CD8-positive, alpha-beta memory T cell (primary cell): ENCODE measurements at regions of chr9 and their contacts with region 1.

Region 1: GRCh38 chr9:6412487-6413364 is at the start of gene UHRF2:
- DNase-seq: peak; percentile 96 to 100 (median 98)
- H3K4me3 ChIP-seq: peak within 1 kb of the TSS; percentile 63
- H3K4me3 Mint-ChIP-seq: peak within 1 kb of the TSS; percentile 89 to 96 (median 92)
- H3K27ac ChIP-seq: peak within 1 kb of the TSS; percentile 79
- H3K27ac Mint-ChIP-seq: peak within 1 kb of the TSS; percentile 83 to 98 (median 92)
- H3K4me1 ChIP-seq: peaks cover 27% of the 10 kb centered on the region
- H3K4me1 Mint-ChIP-seq: peaks cover 34 to 38% (median 36%) of the 10 kb centered on the region in 3 donors
- H3K27me3 ChIP-seq: no peaks in the 10 kb centered on the region
- H3K27me3 Mint-ChIP-seq: no peaks in the 10 kb centered on the region
- total RNA-seq, gene UHRF2: 50.8 to 55.2 TPM

Region 2: DNA sequence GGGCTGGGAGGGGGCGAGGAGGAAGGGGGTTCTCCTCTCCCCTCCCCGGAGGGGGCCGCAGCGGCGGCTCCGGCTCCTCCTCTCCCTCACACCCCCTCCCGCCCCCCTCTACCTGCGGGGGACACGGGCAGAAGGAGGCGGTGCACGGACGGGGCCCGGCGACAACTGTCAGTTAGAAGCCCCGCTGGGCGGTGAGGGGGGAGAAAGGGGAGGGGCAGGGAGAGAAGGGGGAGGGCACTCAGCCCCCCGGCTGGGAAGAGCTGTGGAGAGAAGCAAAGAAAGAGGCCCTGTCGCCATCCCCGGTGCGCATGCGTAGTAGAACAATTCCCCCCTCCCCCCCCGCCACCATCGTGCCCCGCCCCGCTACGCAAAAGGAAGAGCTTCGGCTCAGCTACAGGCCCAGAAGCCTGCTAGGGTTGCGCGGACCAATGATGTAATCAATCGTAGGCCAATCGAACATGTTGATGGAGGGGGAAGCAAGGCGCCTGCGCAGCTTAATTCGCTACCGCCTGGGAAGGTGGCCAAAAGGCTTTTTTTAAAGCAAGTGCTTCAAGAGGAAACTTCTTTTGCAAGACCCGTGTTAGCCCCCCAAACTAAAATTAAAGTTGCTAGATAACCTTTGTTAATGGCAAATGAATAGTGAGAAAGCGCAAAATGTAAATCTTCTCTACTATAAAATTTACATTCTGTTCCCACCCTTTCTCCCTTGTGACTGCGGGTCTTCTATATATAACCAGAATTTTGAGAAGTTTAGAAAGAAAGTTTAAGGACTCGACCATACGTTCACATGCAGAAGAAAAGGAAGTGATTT is 404.4 kb before region 1 on chr9:
- CTCF ChIA-PET with region 1: no interaction called
- POLR2A ChIA-PET with region 1: interaction called, 14 read pairs
- DNase-seq: peak; percentile 86 to 98 (median 92)
- H3K4me3 ChIP-seq: peak overlapping the region; percentile 58
- H3K4me3 Mint-ChIP-seq: peak overlapping the region; percentile 80 to 99 (median 94)
- H3K27ac ChIP-seq: peak overlapping the region; percentile 81
- H3K27ac Mint-ChIP-seq: peak overlapping the region; percentile 56 to 99 (median 90)
- H3K4me1 ChIP-seq: peaks cover 34% of the 10 kb centered on the region
- H3K4me1 Mint-ChIP-seq: peaks cover 47 to 72% (median 67%) of the 10 kb centered on the region in 3 donors
- H3K27me3 ChIP-seq: no peaks in the 10 kb centered on the region
- H3K27me3 Mint-ChIP-seq: peaks cover 0 to 2% of the 10 kb centered on the region in 2 donors

Region 3: DNA sequence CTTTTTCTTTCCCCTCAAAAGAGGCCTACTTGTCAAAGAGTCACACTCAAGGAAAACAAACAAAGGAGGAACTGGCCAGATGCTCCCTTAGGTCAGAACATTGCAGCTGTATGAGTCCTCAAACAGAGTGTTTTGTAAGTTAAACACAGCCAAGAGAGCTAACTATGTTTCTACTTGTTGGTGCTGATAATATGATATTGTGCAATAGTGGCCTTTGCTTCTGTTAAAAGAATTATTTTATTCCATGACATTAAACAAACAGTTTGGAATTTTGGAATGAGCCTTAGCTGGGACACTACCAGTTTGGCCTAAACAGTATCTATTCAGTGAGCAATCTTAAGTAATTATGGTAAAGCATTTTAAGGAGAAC is 140.5 kb before region 1 on chr9:
- CTCF ChIA-PET with region 1: no interaction called
- POLR2A ChIA-PET with region 1: no interaction called
- DNase-seq: no peak
- H3K4me3 ChIP-seq: no peak overlapping the region
- H3K4me3 Mint-ChIP-seq: no peak overlapping the region
- H3K27ac ChIP-seq: no peak overlapping the region
- H3K27ac Mint-ChIP-seq: no peak overlapping the region
- H3K4me1 ChIP-seq: no peaks in the 10 kb centered on the region
- H3K4me1 Mint-ChIP-seq: no peaks in the 10 kb centered on the region
- H3K27me3 ChIP-seq: no peaks in the 10 kb centered on the region
- H3K27me3 Mint-ChIP-seq: peaks cover 13 to 22% of the 10 kb centered on the region in 2 donors

Region 4: GRCh38 chr9:6428940-6429889 is 16.5 kb after region 1 on chr9:
- CTCF ChIA-PET with region 1: interaction called, 5 read pairs
- POLR2A ChIA-PET with region 1: interaction called, 45 read pairs
- DNase-seq: peak in 2 of 5 donors; percentile 49 to 52
- H3K4me3 ChIP-seq: no peak overlapping the region
- H3K4me3 Mint-ChIP-seq: peak overlapping the region; percentile 48 to 83 (median 80)
- H3K27ac ChIP-seq: peak overlapping the region; percentile 13
- H3K27ac Mint-ChIP-seq: peak overlapping the region; percentile 32 to 98 (median 88)
- H3K4me1 ChIP-seq: peaks cover 54% of the 10 kb centered on the region
- H3K4me1 Mint-ChIP-seq: peaks cover 74 to 97% (median 93%) of the 10 kb centered on the region in 3 donors
- H3K27me3 ChIP-seq: no peaks in the 10 kb centered on the region
- H3K27me3 Mint-ChIP-seq: no peaks in the 10 kb centered on the region

Region 5: GRCh38 chr9:6757456-6758247 is 344.9 kb after region 1 on chr9 and contains the start of gene KDM4C:
- CTCF ChIA-PET with region 1: no interaction called
- POLR2A ChIA-PET with region 1: interaction called, 34 read pairs
- DNase-seq: peak; percentile 90 to 97 (median 93)
- H3K4me3 ChIP-seq: peak within 1 kb of the TSS; percentile 86
- H3K4me3 Mint-ChIP-seq: peak within 1 kb of the TSS; percentile 94 to 99 (median 97)
- H3K27ac ChIP-seq: peak within 1 kb of the TSS; percentile 97
- H3K27ac Mint-ChIP-seq: peak within 1 kb of the TSS; percentile 99 to 100 (median 100)
- H3K4me1 ChIP-seq: peaks cover 14% of the 10 kb centered on the region
- H3K4me1 Mint-ChIP-seq: peaks cover 28 to 44% (median 38%) of the 10 kb centered on the region in 3 donors
- H3K27me3 ChIP-seq: no peaks in the 10 kb centered on the region
- H3K27me3 Mint-ChIP-seq: peaks cover 0 to 7% of the 10 kb centered on the region in 2 donors
- total RNA-seq, gene KDM4C: 25.9 to 26.8 TPM